ENCODE measurements at regions of chrX and their contacts with region 1.

Region 1: GRCh38 chrX:24034485-24034884 is 7.5 kb upstream of the KLHL15 start:
- DNase-seq: no peak
- ATAC-seq: no peak
- H3K4me3 ChIP-seq: no peak overlapping the region
- H3K4me3 Mint-ChIP-seq: no peak overlapping the region
- H3K27ac ChIP-seq: no peak overlapping the region
- H3K27ac Mint-ChIP-seq: no peak overlapping the region
- H3K4me1 ChIP-seq: no peaks in the 10 kb centered on the region
- H3K4me1 Mint-ChIP-seq: no peaks in the 10 kb centered on the region
- H3K27me3 ChIP-seq: no peaks in the 10 kb centered on the region
- H3K27me3 Mint-ChIP-seq: no peaks in the 10 kb centered on the region
- CTCF ChIP-seq: no peak

Region 2: DNA sequence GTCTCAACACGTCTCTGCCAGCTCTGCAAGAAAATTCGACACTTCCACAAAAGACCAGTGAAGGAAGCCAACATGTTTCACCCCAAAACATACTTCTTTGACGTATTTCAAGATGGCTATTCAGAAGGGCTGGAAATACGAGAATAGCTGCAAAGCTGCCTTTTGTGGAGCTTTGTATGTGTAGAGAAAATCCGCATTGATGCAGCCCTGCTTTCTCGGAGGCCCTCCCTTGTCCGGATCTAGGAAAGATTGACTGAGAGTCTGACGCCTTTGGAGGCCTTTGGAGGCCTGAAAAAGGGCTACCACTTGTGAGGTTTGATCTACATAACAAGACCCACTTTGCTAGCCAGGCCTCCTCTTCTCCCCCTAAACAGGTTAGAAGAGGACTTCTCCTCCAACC is 239.3 kb before region 1 on chrX:
- CTCF ChIA-PET with region 1: no interaction called
- POLR2A ChIA-PET with region 1: no interaction called
- intact Hi-C with region 1: no loop called
- DNase-seq: no peak
- ATAC-seq: no peak
- H3K4me3 ChIP-seq: no peak overlapping the region
- H3K4me3 Mint-ChIP-seq: no peak overlapping the region
- H3K27ac ChIP-seq: no peak overlapping the region
- H3K27ac Mint-ChIP-seq: no peak overlapping the region
- H3K4me1 ChIP-seq: no peaks in the 10 kb centered on the region
- H3K4me1 Mint-ChIP-seq: no peaks in the 10 kb centered on the region
- H3K27me3 ChIP-seq: no peaks in the 10 kb centered on the region
- H3K27me3 Mint-ChIP-seq: no peaks in the 10 kb centered on the region
- CTCF ChIP-seq: no peak

Region 3: GRCh38 chrX:24069877-24070276 is 35.4 kb after region 1 on chrX:
- CTCF ChIA-PET with region 1: no interaction called
- POLR2A ChIA-PET with region 1: no interaction called
- intact Hi-C with region 1: loop called in 1 of 2 experiments (anchors 2 kb)
- DNase-seq: no peak
- ATAC-seq: no peak
- H3K4me3 ChIP-seq: no peak overlapping the region
- H3K4me3 Mint-ChIP-seq: no peak overlapping the region
- H3K27ac ChIP-seq: no peak overlapping the region
- H3K27ac Mint-ChIP-seq: no peak overlapping the region
- H3K4me1 ChIP-seq: no peaks in the 10 kb centered on the region
- H3K4me1 Mint-ChIP-seq: no peaks in the 10 kb centered on the region
- H3K27me3 ChIP-seq: no peaks in the 10 kb centered on the region
- H3K27me3 Mint-ChIP-seq: no peaks in the 10 kb centered on the region
- CTCF ChIP-seq: no peak